ENCODE measurements at regions of chr9 and their contacts with region 1.

Region 1: DNA sequence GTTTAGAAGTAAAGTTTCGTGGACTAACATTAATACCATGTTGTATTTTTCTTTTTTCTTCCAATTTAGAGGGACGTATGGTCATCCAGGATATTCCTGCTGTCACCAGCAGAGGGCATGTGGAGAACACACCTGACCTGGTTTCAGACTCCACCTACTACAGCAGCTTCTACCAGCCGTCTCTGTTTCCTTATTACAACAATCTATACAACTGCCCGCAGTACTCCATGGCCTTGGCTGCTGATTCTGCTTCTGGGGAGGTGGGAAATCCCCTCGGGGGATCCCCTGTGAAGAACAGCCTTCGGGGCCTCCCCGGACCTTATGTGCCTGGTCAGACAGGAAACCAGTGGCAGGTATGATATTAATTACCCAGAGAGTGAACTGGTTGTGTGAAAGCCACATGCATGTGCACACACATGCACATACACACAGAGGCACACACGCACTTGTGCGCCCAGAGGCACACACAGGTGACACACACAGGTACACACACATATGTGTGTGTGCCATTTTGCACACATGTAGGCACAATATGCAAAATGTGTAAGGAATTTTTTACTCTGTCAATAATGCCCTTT is 52.4 kb downstream of the DMRT1 start:
- H3K4me3 ChIP-seq: no peak overlapping the region
- H3K27ac ChIP-seq: no peak overlapping the region
- H3K4me1 ChIP-seq: peaks cover 5% of the 10 kb centered on the region; the same call in 1 of the 2 replicates
- CTCF ChIP-seq: peak; percentile 38; the same call in 1 of the 2 replicates

Region 2: DNA sequence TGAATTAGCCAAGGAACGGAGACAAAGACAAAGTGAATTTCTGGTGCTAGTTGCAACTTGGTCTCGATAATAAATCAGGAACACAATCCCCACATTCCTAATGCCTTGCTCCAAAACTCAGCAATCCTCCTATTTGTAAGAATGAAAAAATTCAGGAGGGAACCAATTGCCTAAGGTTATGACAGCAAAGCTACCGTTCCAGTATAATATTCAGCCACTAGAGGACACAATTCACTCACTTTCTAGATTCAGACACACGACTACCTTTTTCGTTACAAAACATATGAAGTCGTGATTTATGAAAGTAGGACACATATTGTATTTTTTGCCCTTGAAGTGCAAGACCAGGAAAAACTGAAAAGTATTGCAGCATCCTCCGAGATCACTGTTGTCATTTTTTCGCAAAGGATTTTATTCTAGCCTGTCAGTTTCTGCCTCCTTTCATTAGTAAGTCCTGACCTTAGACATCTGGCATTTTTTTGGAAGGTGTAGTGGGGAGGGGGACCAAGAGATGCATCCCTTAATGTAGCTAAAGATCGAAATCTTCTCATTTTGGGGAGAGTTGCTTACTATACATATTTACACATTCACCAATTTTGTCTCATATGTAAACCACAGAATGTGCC is 546.2 kb before region 1 on chr9:
- CTCF ChIA-PET with region 1: interaction called, 13 read pairs
- POLR2A ChIA-PET with region 1: no interaction called
- H3K4me3 ChIP-seq: no peak overlapping the region
- H3K27ac ChIP-seq: no peak overlapping the region
- H3K4me1 ChIP-seq: no peaks in the 10 kb centered on the region
- CTCF ChIP-seq: peak; percentile 54

Region 3: DNA sequence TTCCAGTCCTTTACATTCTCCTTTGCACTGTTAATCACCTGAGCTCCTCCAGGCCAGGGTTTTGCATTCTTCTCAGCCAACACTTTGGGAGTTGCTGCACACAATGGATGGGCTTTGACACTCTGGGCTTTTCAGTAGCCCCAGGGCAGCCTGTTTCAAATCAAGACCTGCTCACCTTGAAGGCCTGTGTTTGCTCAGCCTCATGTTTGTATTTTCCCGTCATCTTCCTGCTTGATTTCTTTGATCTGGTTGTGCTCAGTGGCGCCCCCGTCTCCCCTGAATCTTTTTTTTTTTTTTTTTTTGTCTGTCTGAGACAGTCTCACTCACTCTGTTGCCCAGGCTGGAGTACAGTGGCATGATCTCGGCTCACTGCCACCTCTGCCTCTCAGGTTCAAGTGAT is 11.5 kb before region 1 on chr9:
- CTCF ChIA-PET with region 1: interaction called, 13 read pairs
- POLR2A ChIA-PET with region 1: no interaction called
- H3K4me3 ChIP-seq: no peak overlapping the region
- H3K27ac ChIP-seq: no peak overlapping the region
- H3K4me1 ChIP-seq: no peaks in the 10 kb centered on the region
- CTCF ChIP-seq: no peak

Region 4: DNA sequence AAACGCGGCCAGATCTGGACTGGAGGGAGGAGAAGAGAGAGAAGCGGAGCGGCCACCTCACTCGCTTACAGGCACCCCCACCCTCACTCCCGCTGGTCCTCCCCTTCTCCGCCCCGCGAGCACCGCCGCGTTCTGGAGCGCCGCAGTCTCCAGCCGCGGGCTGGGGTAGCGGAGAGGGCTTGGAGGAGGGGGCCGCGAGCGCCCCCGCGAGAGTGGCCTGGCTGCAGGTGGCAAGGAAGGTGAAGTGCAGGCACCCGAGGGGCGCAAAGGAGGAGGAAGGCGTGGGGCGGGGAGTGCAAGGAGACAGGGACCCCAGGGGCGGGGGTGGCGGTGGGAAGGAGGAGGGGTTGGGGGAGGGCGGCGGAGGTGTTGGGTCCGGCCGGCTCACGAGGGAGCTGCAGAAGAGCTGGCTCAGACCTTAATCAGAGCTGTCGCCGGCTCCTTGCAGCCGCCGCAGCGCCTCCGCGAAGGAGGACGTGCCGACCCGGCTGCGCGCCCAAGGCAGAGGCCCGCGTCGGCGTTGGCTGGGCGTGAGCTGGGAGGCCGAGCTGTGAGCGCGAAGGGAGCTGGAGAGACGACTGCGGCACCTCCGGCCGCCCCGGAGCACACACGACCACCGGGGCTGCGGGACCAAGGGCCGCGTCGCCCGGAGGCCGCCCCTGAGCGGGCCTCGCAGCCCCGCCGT is 82.5 kb after region 1 on chr9 and contains the start of gene DMRT3:
- CTCF ChIA-PET with region 1: interaction called, 10 read pairs
- POLR2A ChIA-PET with region 1: interaction called, 18 read pairs
- H3K4me3 ChIP-seq: peak within 1 kb of the TSS; percentile 68
- H3K27ac ChIP-seq: peak within 1 kb of the TSS; percentile 74
- H3K4me1 ChIP-seq: no peaks in the 10 kb centered on the region; the same call in 1 of the 2 replicates
- CTCF ChIP-seq: peak; percentile 87

Region 5: GRCh38 chr9:994005-994404 is 100.1 kb after region 1 on chr9:
- CTCF ChIA-PET with region 1: interaction called, 25 read pairs
- POLR2A ChIA-PET with region 1: no interaction called
- H3K4me3 ChIP-seq: no peak overlapping the region
- H3K27ac ChIP-seq: no peak overlapping the region
- H3K4me1 ChIP-seq: 0 out of 2 replicates have a peak, but pooled peaks cover under 1% of the 10 kb centered on the region
- CTCF ChIP-seq: no peak